Activated CD4-positive, alpha-beta T cell treated with anti-CD3 and anti-CD28 coated beads for 36 hours (primary cell): ENCODE measurements at regions of chr16 and their contacts with region 1.

Region 1: DNA sequence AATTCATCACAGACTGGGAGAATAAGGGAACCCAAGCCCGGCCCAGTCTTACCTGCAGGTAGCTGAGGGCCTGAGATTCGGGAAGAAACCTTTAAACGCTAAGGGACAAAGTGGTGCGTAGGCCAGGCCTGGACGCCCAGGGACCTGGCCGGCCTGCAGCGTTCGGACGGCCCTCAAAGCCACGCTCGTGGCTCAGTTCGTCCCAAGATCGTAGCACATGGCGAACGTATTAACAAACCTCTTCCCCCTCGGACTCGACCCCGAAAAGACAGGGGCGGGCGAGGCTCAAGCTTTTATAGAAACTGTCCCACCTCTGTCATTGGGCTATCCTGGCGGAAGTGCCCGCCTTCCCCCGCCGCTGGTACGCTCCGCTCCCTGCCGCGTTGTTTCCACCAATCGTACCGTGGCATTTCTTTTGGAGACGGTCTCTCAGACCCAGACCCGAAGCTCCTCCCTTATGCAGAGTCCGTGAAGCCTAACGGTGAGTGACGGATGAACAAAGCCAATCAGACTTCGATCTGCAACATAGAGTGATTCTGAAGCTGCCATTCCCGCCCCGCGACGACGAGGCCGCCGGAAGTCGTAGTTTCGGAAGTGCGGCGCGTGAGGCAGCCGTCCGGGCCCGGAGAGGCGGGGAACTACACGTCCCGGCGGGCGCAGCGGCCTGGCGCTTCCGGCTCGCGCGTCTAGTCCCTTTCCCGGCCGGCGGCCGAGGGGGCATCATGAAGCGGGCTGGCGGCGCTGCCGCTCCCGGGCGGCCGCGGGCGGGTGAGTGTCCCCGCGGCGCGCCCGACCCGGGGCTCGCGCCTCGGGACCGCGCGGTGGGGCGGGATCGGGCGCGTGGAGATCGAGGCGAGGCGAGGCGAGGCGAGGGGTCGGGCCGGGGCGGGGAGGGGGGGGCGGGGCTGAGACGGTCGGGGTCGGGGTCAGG is at the start of gene TRAF7:
- DNase-seq: peak; percentile 98
- ATAC-seq: peak; percentile 95
- H3K4me3 Mint-ChIP-seq: peak within 1 kb of the TSS; percentile 89
- H3K27ac Mint-ChIP-seq: peak within 1 kb of the TSS; percentile 94
- H3K4me1 Mint-ChIP-seq: peaks cover 31% of the 10 kb centered on the region
- H3K27me3 Mint-ChIP-seq: no peaks in the 10 kb centered on the region
- total RNA-seq, gene TRAF7: 70.7 to 93.7 TPM

Region 2: DNA sequence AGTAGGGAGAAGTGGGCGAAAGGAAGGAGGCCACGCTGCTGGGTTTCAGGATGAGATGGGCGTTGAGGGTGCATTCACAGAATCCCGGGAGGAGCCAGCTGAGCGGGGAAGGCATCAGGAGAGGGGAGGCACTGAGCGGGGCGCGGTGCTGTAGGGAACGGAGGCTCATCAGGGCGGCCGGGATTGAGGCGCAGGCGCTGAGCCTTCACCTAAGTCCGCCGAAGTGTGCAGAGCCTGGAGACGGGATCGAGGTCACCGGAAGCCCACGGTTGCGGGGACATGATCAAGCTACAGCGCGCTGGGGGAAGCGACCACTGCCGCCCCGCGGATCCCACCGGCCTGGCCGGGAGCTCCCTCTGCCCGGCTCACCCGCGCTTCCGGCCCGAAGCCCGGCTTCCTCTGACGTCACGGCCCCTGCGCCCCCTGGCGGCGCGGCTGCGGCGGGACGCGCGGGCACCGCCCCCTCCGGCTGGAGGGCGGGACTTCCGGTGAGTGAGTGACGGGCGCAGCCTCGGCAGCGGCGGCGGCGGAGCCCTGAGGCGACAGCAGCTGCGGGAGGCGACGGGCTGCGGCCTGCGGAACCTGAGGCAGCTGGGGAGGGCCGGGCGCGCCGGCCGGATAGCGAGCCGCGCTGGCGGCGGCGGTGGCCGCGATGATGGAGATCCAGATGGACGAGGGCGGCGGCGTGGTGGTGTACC is 449.5 kb before region 1 on chr16 and contains the start of gene MAPK8IP3:
- CTCF ChIA-PET with region 1: no interaction called
- POLR2A ChIA-PET with region 1: no interaction called
- intact Hi-C with region 1: loop called in 1 of 2 experiments (anchors 2 kb)
- DNase-seq: peak; percentile 96
- ATAC-seq: peak; percentile 80
- H3K4me3 Mint-ChIP-seq: peak within 1 kb of the TSS; percentile 92
- H3K27ac Mint-ChIP-seq: peak within 1 kb of the TSS; percentile 90
- H3K4me1 Mint-ChIP-seq: peaks cover 32% of the 10 kb centered on the region
- H3K27me3 Mint-ChIP-seq: no peaks in the 10 kb centered on the region
- total RNA-seq, gene MAPK8IP3: 56.7 to 57.6 TPM

Region 3: DNA sequence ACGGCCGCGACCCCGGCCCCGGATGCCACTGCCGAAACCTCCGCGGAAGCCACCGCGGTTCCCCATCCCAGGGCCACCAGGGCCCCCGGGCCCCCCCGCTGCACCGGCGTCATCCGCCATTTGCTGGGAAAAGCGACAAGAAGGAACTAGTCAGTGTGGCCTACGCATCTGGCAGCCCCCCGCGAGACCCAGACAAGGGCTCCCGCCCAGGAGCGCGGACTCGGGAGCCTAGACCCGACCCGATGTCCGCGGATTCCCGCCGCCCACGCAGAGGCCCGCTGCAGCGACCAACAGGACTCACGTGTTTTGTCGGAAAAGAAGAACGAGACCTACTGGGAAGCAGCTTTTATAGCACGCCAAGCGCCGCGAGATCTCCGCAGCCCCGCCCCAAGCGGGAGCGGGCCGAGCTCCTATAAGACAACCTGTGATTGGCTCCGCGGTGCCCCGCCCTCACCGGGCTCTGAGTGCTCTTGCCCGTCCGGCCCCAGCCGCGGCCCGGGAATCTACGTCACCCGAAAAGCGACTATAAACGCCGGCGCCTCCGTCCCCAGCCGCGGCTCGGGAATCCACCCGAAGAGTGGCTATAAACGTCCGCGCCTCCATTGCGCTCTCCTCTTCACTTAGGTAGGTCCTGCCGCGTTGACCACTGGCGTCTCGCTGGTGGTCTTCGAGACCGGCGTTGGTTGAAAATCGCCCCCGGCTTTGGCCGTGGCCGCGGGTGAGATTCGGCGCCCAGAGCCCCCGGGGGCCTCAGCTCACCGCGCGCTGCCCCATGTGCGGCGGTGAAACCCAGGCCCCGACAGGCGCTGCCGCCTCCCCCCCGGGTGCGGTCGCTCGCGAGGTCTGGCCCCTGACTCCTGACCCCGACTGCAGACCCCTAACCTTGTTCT is 190.6 kb before region 1 on chr16 and contains the start of gene RPS2:
- CTCF ChIA-PET with region 1: no interaction called
- POLR2A ChIA-PET with region 1: interaction called, 12 read pairs
- intact Hi-C with region 1: loop called (anchors 1 to 2 kb)
- DNase-seq: peak; percentile 100
- ATAC-seq: peak; percentile 81
- H3K4me3 Mint-ChIP-seq: peak within 1 kb of the TSS; percentile 96
- H3K27ac Mint-ChIP-seq: peak within 1 kb of the TSS; percentile 99
- H3K4me1 Mint-ChIP-seq: peaks cover 38% of the 10 kb centered on the region
- H3K27me3 Mint-ChIP-seq: no peaks in the 10 kb centered on the region
- total RNA-seq, gene RPS2: 5,351 to 6,287 TPM

Region 4: GRCh38 chr16:2023098-2023925 is 132.0 kb before region 1 on chr16:
- CTCF ChIA-PET with region 1: interaction called, 6 read pairs
- POLR2A ChIA-PET with region 1: interaction called, 5 read pairs
- intact Hi-C with region 1: loop called in 1 of 2 experiments (anchors 1 kb)
- DNase-seq: peak; percentile 97
- ATAC-seq: peak; percentile 86
- H3K4me3 Mint-ChIP-seq: peak overlapping the region; percentile 46
- H3K27ac Mint-ChIP-seq: no peak overlapping the region
- H3K4me1 Mint-ChIP-seq: peaks cover 15% of the 10 kb centered on the region
- H3K27me3 Mint-ChIP-seq: peaks cover 27% of the 10 kb centered on the region

Region 5: GRCh38 chr16:2223375-2224182 is 68.2 kb after region 1 on chr16 and contains the start of gene E4F1:
- CTCF ChIA-PET with region 1: no interaction called
- POLR2A ChIA-PET with region 1: no interaction called
- intact Hi-C with region 1: loop called (anchors 1 kb)
- DNase-seq: peak; percentile 100
- ATAC-seq: peak; percentile 99
- H3K4me3 Mint-ChIP-seq: peak within 1 kb of the TSS; percentile 78
- H3K27ac Mint-ChIP-seq: peak within 1 kb of the TSS; percentile 13
- H3K4me1 Mint-ChIP-seq: peaks cover 15% of the 10 kb centered on the region
- H3K27me3 Mint-ChIP-seq: no peaks in the 10 kb centered on the region
- total RNA-seq, gene E4F1: 18.0 to 18.6 TPM

Region 6: GRCh38 chr16:2682209-2683021 is 527.1 kb after region 1 on chr16 and contains the start of gene KCTD5:
- CTCF ChIA-PET with region 1: no interaction called
- POLR2A ChIA-PET with region 1: interaction called, 4 read pairs
- intact Hi-C with region 1: loop called in 1 of 2 experiments (anchors 1 kb)
- DNase-seq: peak; percentile 98
- ATAC-seq: peak; percentile 92
- H3K4me3 Mint-ChIP-seq: peak within 1 kb of the TSS; percentile 100
- H3K27ac Mint-ChIP-seq: peak within 1 kb of the TSS; percentile 98
- H3K4me1 Mint-ChIP-seq: peaks cover 28% of the 10 kb centered on the region
- H3K27me3 Mint-ChIP-seq: no peaks in the 10 kb centered on the region
- total RNA-seq, gene KCTD5: 24.0 to 26.2 TPM